ENCODE measurements at regions of chr16 and their contacts with region 1.

Region 1: DNA sequence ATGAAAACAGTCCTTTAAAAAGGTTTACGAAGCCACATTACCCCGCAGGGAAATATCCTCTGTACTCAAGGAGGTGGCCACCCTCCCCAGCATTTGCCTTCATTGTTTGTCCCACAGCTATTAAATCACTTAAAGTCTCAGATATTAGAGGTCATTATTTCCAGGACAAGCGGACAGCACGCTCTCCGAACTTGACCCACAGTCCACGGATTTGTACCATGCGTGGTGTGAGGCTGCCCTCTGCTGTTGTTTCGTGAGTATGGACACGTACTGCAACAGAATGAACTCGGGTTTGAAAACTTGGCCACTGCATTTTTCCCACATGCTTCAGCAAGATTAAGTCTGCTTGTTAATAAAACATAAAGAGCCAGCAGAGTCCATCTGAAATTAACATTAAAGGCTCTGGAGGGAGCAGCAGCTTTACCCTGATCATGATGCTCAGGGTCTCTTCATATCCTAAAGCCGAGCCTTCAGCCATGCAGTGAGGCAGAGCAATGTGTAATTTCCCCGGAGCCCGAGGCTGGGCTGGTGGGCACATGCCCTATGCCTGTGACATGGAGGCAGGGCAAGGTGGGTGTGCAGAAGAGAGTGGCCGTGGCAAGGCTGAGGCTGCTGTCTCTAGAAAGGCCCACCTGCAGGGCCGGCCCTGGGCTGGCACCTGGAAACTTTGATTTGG is 19.7 kb downstream of the MEAK7 start:
- DNase-seq: peak; percentile 47 to 62
- ATAC-seq: peak; percentile 68 to 87; a peak in 4 of 6 replicates
- H3K4me3 ChIP-seq: no peak overlapping the region
- H3K27ac ChIP-seq: no peak overlapping the region
- H3K4me1 ChIP-seq: no peaks in the 10 kb centered on the region
- CTCF ChIP-seq: peak; percentile 85
- EP300 ChIP-seq: no peak
- POLR2A ChIP-seq: no peak
- RAD21 ChIP-seq: peak; percentile 95 to 96

Region 2: DNA sequence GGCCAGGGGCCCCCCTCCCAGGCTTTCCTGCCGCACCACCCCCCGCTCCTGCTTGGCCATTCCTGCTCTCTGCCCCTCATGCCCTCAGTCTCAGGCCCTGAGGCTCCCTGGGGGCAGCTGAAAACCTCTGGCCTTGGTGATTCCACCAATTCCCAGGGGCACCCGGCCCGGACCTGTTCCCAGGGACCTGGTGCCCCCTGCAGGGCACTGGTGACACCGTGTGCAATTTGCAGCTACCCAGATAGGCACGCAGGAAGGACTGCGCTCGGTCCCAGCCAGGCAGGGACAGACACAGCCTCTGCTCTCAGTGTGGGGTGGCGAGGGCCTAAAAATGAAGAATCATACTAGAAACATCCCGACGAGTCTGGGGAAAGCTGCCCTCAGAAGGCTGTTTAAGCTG is 176.6 kb before region 1 on chr16:
- CTCF ChIA-PET with region 1: interaction called, 13 read pairs
- POLR2A ChIA-PET with region 1: no interaction called
- DNase-seq: peak; percentile 64
- ATAC-seq: peak; percentile 87 to 96
- H3K4me3 ChIP-seq: no peak overlapping the region
- H3K27ac ChIP-seq: no peak overlapping the region
- H3K4me1 ChIP-seq: no peaks in the 10 kb centered on the region
- CTCF ChIP-seq: peak; percentile 64
- EP300 ChIP-seq: no peak
- POLR2A ChIP-seq: no peak
- RAD21 ChIP-seq: peak; percentile 72 to 81

Region 3: DNA sequence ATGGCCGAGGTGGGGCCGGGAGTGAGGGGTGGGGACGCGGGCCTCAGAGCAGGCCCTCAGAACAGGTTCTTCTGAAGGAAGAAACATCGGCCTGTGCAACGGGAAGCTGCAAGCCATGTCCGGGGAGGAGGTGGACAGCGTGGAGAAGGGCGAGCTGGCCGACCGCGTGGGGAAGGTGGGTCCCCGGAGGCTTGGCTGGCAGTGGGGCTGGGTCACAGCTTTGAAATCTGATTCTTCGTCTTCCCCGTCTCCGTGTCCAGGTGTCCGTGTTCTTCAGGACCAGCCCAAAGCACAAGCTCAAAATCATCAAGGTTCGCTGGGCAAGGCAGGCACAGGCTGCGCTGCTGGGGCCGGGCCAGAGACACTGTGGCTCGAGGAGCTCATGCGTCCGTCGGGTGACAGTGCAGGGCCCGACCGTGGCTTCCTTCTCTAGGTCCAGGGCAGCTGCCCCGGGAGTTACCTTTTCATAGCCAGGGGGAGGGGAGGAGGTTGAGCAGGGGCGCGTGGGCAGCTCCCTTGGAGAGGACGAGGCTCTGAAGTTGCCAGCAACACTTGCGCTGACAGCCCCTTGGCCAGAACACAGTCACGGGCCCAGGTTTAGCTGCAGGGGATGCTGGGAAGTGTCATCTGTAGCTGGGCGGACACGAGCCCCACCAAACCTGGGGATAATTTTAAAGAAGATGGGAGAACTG is 31.5 kb before region 1 on chr16:
- CTCF ChIA-PET with region 1: interaction called, 11 read pairs
- POLR2A ChIA-PET with region 1: no interaction called
- DNase-seq: no peak
- ATAC-seq: no peak
- H3K4me3 ChIP-seq: no peak overlapping the region
- H3K27ac ChIP-seq: no peak overlapping the region
- H3K4me1 ChIP-seq: no peaks in the 10 kb centered on the region
- CTCF ChIP-seq: no peak
- EP300 ChIP-seq: no peak
- POLR2A ChIP-seq: no peak
- RAD21 ChIP-seq: no peak

Region 4: DNA sequence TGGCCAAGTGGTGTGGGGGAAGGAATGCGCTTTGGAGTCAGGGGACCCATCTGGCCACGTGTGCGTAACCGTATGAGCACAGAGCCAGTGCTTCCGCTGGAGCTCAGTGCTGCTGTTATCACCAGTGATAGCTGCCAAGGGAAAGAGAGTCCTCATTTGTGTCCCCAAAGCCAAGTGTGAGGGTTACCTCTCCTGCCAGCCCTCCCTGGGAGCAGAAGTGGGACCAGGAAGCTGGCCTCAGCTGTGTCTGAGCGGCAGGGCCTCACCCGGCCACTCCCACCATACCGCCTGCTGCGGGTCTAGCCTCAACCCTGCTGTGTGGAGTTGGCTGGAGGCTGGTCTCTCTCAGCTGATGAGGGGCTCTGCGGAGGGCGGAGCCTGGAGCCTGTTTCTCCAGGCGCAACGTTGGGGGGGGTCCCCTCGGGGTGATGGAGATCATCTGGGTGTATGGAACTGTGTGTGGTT is 24.7 kb before region 1 on chr16:
- CTCF ChIA-PET with region 1: interaction called, 13 read pairs
- POLR2A ChIA-PET with region 1: no interaction called
- DNase-seq: no peak
- ATAC-seq: peak in 1 of 2 experiments; percentile 21; a peak in 3 of 6 replicates
- H3K4me3 ChIP-seq: no peak overlapping the region
- H3K27ac ChIP-seq: no peak overlapping the region
- H3K4me1 ChIP-seq: no peaks in the 10 kb centered on the region
- CTCF ChIP-seq: no peak
- EP300 ChIP-seq: no peak
- POLR2A ChIP-seq: no peak
- RAD21 ChIP-seq: no peak

Region 5: GRCh38 chr16:84464967-84465553 is 19.7 kb before region 1 on chr16:
- CTCF ChIA-PET with region 1: interaction called, 13 read pairs
- POLR2A ChIA-PET with region 1: no interaction called
- DNase-seq: no peak
- ATAC-seq: no peak
- H3K4me3 ChIP-seq: no peak overlapping the region
- H3K27ac ChIP-seq: no peak overlapping the region
- H3K4me1 ChIP-seq: no peaks in the 10 kb centered on the region
- CTCF ChIP-seq: no peak
- EP300 ChIP-seq: no peak
- POLR2A ChIP-seq: no peak
- RAD21 ChIP-seq: no peak

Region 6: DNA sequence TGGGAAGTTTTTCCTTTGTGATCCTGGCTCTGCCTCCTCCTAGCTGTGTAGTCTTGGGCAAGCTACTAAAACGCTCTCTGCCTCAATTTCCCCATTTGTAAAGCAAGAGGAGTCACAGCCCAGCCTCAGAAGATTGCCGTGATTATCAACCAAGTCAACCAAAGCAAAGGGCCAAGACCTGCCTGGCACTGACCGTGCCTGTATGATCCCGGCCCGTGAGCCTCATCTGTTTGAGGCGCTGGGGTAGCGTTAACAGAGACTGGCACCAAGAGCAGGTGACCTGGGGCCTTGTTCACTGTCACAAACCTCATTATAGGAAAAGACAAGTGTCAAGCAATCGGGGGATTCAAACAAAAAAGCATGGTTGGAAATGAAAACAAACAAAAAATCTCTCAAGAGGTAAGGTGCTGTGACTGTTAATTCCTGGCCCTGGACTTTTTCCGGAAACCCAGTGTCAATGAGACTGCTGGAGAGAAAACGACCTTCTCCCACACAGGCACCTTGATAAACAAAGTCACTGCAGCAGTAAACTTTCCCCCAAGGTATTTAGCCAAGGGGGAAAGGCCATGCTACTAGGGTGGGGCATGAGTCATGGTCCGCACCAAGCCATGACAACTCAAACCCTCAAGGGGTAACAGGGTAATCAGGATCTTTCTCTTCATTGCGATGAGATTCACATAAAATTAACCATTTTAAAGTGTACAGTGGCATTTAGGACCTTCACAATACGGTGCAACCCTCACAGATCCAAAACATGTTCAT is 14.3 kb after region 1 on chr16:
- CTCF ChIA-PET with region 1: interaction called, 70 read pairs
- POLR2A ChIA-PET with region 1: no interaction called
- DNase-seq: no peak
- ATAC-seq: no peak
- H3K4me3 ChIP-seq: no peak overlapping the region
- H3K27ac ChIP-seq: peak overlapping the region in 1 of 2 experiments; percentile 95; a peak in 2 of 6 replicates
- H3K4me1 ChIP-seq: peaks cover 50% of the 10 kb centered on the region
- CTCF ChIP-seq: no peak
- EP300 ChIP-seq: no peak
- POLR2A ChIP-seq: no peak
- RAD21 ChIP-seq: no peak

Region 7: GRCh38 chr16:84544031-84544773 is 59.5 kb after region 1 on chr16:
- CTCF ChIA-PET with region 1: no interaction called
- POLR2A ChIA-PET with region 1: no interaction called
- DNase-seq: no peak
- ATAC-seq: no peak
- H3K4me3 ChIP-seq: no peak overlapping the region
- H3K27ac ChIP-seq: 0 out of 6 replicates have a peak overlapping the region, but pooled peaks of 1 of the 2 experiments have one; percentile 25
- H3K4me1 ChIP-seq: peaks cover 8% of the 10 kb centered on the region; the same call in 1 of the 3 replicates
- CTCF ChIP-seq: no peak
- EP300 ChIP-seq: no peak
- POLR2A ChIP-seq: no peak
- RAD21 ChIP-seq: no peak

Measured in A549 (cell line).